Activated naive CD8-positive, alpha-beta T cell treated with anti-CD3 and anti-CD28 coated beads, Interleukin-2, amount 10 ng/mL, durations not matched to agents 7 days and 5 days (primary cell): ENCODE measurements at regions of chr9 and their contacts with region 1.

Region 1: GRCh38 chr9:125241000-125241862 is at the start of gene HSPA5:
- DNase-seq: peak; percentile 95
- ATAC-seq: peak; percentile 94
- H3K4me3 Mint-ChIP-seq: peak within 1 kb of the TSS; percentile 99
- H3K27ac Mint-ChIP-seq: peak within 1 kb of the TSS; percentile 99
- H3K4me1 Mint-ChIP-seq: peaks cover 30% of the 10 kb centered on the region
- H3K27me3 Mint-ChIP-seq: no peaks in the 10 kb centered on the region
- total RNA-seq, gene HSPA5: 77.4 to 81.3 TPM

Region 2: DNA sequence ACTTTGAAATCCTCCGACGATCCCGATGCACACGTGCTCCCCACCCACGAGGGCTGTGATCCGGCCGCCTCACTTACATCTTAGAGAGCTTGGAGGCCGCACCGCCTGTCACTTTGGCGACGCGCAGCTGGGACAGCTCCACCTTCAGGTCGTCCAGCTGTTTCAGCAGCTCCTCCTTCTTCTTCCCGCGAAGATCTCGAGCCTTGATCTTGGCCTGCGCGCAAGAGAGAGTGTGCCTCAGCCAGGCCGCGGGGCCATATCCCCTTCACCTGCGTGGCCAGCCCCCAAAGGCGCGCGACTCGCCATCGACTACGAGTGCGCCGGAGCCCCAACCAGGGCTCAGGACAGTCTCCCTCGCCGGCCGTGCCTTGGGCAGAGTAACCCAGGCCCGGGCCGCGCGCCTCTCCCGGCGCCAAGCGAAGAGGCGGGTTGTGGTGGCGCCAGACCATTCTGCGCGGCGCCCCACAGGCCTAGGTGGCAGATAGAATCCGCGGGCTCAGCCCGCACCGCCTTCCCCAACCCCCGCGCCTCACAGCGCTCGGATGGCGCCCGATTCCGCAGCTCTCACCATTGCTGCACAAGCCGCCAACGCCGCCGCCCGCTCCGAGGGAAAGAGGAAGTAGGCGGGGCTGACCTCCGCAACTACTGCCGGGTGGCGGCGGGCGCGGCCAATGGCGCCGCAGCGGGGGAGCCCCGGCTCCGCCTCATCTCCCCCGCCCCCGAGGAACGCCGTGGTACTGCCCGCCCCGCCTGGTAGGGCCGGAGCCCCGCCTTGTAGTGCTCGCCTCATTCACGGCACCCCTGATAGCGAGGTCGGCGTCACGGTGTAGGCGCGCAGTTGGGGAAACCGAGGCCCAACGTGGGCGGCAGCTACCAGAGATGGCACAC is 379.6 kb before region 1 on chr9 and contains the starts of genes ARPC5L and RPL35:
- POLR2A ChIA-PET with region 1: interaction called, 13 read pairs
- DNase-seq: peak; percentile 97
- ATAC-seq: peak; percentile 95
- H3K4me3 Mint-ChIP-seq: peak within 1 kb of the TSS; percentile 91
- H3K27ac Mint-ChIP-seq: peak within 1 kb of the TSS; percentile 98
- H3K4me1 Mint-ChIP-seq: peaks cover 23% of the 10 kb centered on the region
- H3K27me3 Mint-ChIP-seq: no peaks in the 10 kb centered on the region
- total RNA-seq, gene ARPC5L: 68.2 to 70.2 TPM
- total RNA-seq, gene RPL35: 1,398 to 1,411 TPM

Region 3: GRCh38 chr9:125189361-125190289 is 51.6 kb before region 1 on chr9 and contains the start of gene PPP6C:
- POLR2A ChIA-PET with region 1: interaction called, 18 read pairs
- DNase-seq: peak; percentile 97
- ATAC-seq: peak; percentile 98
- H3K4me3 Mint-ChIP-seq: peak within 1 kb of the TSS; percentile 96
- H3K27ac Mint-ChIP-seq: peak within 1 kb of the TSS; percentile 96
- H3K4me1 Mint-ChIP-seq: peaks cover 29% of the 10 kb centered on the region
- H3K27me3 Mint-ChIP-seq: no peaks in the 10 kb centered on the region
- total RNA-seq, gene PPP6C: 48.8 to 50.4 TPM

Region 4: GRCh38 chr9:125255781-125256391 is 14.7 kb after region 1 on chr9:
- POLR2A ChIA-PET with region 1: interaction called, 73 read pairs
- DNase-seq: no peak
- ATAC-seq: no peak
- H3K4me3 Mint-ChIP-seq: no peak overlapping the region
- H3K27ac Mint-ChIP-seq: no peak overlapping the region
- H3K4me1 Mint-ChIP-seq: peaks cover 1% of the 10 kb centered on the region
- H3K27me3 Mint-ChIP-seq: peaks cover 4% of the 10 kb centered on the region

Region 5: GRCh38 chr9:125361837-125362531 is 120.8 kb after region 1 on chr9:
- POLR2A ChIA-PET with region 1: interaction called, 10 read pairs
- DNase-seq: no peak
- ATAC-seq: peak; percentile 74
- H3K4me3 Mint-ChIP-seq: no peak overlapping the region
- H3K27ac Mint-ChIP-seq: peak overlapping the region; percentile 21
- H3K4me1 Mint-ChIP-seq: peaks cover 7% of the 10 kb centered on the region
- H3K27me3 Mint-ChIP-seq: no peaks in the 10 kb centered on the region